HEK293 (cell line): ENCODE measurements at regions of chr6 and their contacts with region 1.

Region 1: DNA sequence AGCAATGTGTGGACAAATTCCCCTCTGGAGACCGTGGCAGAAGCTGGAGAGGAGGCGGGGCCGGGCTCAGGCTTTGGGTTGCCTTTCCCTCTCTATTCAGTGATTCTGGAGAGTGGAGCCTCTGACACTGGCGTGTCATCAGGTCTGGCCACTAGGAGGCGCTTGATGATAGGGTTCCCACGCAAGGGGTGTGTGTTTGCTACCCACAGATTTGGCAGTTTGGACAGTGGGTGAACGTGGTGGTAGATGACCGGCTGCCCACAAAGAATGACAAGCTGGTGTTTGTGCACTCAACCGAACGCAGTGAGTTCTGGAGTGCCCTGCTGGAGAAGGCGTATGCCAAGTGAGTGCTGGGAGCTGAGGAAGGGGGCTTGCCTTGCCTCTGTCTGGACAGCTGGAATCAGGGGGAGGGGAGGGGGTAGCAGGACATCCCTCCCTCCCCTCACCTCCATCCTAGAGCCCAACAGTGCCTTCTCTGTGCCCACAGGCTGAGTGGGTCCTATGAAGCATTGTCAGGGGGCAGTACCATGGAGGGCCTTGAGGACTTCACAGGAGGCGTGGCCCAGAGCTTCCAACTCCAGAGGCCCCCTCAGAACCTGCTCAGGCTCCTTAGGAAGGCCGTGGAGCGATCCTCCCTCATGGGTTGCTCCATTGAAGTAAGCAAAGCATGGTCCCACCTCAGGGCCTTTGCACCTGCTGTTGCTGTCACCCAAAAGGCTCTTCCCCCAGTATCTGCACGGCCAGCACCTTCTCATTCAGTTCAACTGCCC is 14.3 kb downstream of the CAPN11 start:
- H3K4me3 ChIP-seq: no peak overlapping the region
- H3K27ac ChIP-seq: no peak overlapping the region
- H3K4me1 ChIP-seq: no peaks in the 10 kb centered on the region
- CTCF ChIP-seq: peak; percentile 83

Region 2: GRCh38 chr6:43823879-43824702 is 348.8 kb before region 1 on chr6:
- CTCF ChIA-PET with region 1: no interaction called
- POLR2A ChIA-PET with region 1: no interaction called
- H3K4me3 ChIP-seq: no peak overlapping the region
- H3K27ac ChIP-seq: no peak overlapping the region
- H3K4me1 ChIP-seq: peaks cover 7% of the 10 kb centered on the region; the same call in 1 of the 2 replicates
- CTCF ChIP-seq: no peak

Region 3: DNA sequence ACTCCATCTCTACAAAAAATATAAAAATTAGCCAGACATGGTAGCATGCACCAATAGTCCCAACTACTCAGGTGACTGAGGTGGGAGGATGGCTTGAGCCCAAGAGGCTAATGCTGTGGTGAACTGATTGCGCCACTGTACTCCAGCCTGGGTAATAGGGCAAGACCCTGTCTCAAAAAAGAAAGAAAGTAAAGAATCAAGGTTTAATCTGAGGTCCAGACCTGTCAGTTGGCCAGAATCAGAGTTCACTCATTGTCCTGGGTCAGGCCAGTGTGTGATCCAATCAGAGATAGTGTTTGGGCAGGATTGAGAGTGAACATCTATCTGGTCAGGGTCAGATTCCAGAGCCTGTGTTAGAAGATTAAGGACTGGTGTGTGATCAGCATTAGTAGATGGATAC is 30.1 kb before region 1 on chr6:
- CTCF ChIA-PET with region 1: interaction called, 13 read pairs
- POLR2A ChIA-PET with region 1: no interaction called
- H3K4me3 ChIP-seq: no peak overlapping the region
- H3K27ac ChIP-seq: no peak overlapping the region
- H3K4me1 ChIP-seq: no peaks in the 10 kb centered on the region
- CTCF ChIP-seq: no peak

Region 4: DNA sequence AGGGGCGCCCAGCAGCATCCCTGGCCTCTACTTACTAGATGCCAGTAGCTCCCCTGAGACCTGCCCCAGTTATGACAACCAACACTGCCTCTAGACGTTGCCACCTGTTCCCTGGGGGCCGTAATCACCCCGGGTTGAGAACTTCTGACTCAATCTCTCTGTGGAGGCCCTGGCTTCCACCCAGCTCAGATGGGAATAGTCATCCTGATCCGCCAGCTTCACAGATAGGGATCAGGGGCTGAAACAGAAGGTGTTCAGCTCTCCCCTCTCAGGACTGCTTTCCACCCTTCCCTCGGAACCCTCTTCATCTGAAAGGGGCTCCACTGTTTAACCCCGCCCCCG is 10.9 kb before region 1 on chr6:
- CTCF ChIA-PET with region 1: interaction called, 36 read pairs
- POLR2A ChIA-PET with region 1: no interaction called
- H3K4me3 ChIP-seq: no peak overlapping the region
- H3K27ac ChIP-seq: no peak overlapping the region
- H3K4me1 ChIP-seq: peaks cover 5% of the 10 kb centered on the region; the same call in 1 of the 2 replicates
- CTCF ChIP-seq: no peak

Region 5: GRCh38 chr6:44201200-44201599 is 28.3 kb after region 1 on chr6:
- CTCF ChIA-PET with region 1: interaction called, 10 read pairs
- POLR2A ChIA-PET with region 1: no interaction called
- H3K4me3 ChIP-seq: no peak overlapping the region
- H3K27ac ChIP-seq: no peak overlapping the region
- H3K4me1 ChIP-seq: no peaks in the 10 kb centered on the region
- CTCF ChIP-seq: no peak

Region 6: GRCh38 chr6:44237813-44238433 is 65.0 kb after region 1 on chr6:
- CTCF ChIA-PET with region 1: interaction called, 114 read pairs
- POLR2A ChIA-PET with region 1: interaction called, 3 read pairs
- H3K4me3 ChIP-seq: peak overlapping the region; percentile 61
- H3K27ac ChIP-seq: peak overlapping the region; percentile 59; the same call in 1 of the 2 replicates
- H3K4me1 ChIP-seq: peaks cover 4% of the 10 kb centered on the region; the same call in 1 of the 2 replicates
- CTCF ChIP-seq: peak; percentile 98

Region 7: DNA sequence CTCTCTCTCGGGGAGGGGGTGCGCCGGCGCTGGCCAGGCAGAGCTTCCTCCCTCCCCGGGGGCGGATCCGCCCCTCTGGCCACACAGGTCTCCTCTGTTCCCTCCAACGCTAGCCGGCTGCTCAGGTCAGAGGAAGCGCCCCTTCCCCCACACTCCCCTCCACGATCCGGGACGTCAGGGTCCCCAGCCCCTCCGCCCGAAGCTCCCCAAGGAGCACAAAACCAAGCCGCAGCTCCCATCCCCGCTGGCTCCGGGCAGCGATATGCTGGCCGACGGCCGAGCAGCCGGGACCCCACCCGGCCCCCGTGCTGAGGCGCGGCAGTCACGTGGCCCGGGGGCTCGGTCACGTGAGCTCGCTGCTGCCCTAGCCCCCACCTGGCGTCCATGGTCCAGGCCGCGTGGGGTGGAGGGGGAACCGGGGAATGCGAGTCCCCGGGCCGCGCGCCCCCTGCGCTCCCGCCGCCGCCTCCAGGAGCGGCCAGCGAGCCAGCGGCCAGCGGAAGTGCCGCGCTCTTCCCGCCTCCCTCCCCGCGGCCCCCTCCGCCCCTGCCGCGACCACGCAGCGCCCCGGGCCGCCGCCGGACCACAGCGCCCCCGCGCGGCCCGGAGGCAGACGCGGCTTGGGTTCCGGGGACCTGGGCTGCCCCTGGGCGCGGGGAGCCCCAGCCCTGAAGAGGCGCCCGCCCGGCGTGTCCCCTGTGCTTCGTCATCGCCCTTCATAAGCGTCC is 84.3 kb after region 1 on chr6 and contains the start of gene SLC35B2:
- CTCF ChIA-PET with region 1: interaction called, 35 read pairs
- POLR2A ChIA-PET with region 1: interaction called, 9 read pairs
- H3K4me3 ChIP-seq: peak within 1 kb of the TSS; percentile 82
- H3K27ac ChIP-seq: peak within 1 kb of the TSS; percentile 65; the same call in 1 of the 2 replicates
- H3K4me1 ChIP-seq: no peaks in the 10 kb centered on the region
- CTCF ChIP-seq: 0 out of 2 replicates have a peak, but pooled peaks have one; percentile 32